Posterior vena cava (tissue), 2 donors: ENCODE measurements at regions of chr10 and their contacts with region 1.

Region 1: GRCh38 chr10:12902135-12902572 is 99.4 kb downstream of the CCDC3 start:
- DNase-seq: no peak

Region 2: DNA sequence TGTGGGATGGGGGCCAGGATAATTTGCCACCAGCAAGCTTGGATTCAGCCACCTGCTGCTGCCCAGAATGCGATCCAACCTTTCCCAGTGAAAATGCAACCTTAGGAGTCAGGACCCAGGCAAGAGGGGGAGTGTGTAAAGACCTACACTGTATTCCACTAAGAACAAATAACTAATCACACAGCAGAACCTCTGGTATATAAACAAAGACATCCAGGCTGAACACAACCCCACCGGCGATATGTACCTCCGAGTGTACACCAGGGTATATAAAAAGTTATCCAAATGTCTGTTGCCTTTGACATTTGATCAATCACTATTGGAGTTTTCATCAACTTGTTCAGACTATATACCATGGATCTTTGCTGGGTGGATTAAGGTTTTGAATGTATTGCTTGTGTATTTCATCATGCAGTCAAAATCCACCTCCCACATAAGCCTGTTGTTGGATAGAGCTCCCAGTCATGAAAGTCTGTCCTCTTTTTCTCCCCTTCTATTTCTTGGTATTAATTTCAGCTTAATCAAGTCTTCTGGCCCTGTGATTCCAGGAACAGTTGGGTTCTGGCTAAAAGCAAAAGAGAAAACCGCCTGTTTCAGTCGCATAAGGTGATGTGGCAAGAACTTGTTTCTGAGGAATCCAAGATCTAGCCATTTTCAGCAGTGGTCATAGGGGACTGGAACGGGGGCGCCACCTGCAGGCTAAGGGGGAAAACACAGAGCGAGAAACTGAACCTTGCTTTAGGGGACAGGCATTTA is 191.4 kb before region 1 on chr10:
- intact Hi-C with region 1: loop called in 1 of 2 experiments (anchors 10 kb)
- DNase-seq: peak; percentile 93

Region 3: DNA sequence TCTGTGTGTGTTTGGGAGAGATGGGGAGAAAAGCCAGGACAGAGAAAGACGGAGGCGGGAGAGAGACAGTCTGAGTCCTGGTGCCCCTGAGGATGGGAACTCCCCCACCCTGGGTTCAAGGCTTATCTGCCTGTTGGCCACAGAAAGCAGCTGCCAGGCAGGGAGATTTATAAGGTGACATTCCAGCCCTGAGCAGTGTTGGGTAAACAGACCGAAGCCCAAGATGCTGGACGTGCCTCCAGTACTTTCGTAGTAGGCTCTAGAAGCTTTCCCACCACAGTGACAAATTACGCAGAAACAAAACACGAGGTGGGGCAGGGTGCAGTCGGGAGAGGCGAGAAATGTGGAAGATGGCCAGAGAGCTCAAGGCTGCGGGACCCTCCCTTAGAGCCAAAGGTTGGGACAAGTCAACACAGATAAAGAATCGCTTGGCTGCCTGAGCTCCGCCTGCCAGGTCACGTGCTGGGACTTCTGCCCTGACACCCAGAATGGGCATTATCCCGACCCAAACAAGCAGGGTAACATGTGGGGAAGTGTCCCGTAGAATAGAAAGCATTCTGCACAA is 58.3 kb after region 1 on chr10:
- intact Hi-C with region 1: loop called in 1 of 2 experiments (anchors 10 kb)
- DNase-seq: no peak

Region 4: DNA sequence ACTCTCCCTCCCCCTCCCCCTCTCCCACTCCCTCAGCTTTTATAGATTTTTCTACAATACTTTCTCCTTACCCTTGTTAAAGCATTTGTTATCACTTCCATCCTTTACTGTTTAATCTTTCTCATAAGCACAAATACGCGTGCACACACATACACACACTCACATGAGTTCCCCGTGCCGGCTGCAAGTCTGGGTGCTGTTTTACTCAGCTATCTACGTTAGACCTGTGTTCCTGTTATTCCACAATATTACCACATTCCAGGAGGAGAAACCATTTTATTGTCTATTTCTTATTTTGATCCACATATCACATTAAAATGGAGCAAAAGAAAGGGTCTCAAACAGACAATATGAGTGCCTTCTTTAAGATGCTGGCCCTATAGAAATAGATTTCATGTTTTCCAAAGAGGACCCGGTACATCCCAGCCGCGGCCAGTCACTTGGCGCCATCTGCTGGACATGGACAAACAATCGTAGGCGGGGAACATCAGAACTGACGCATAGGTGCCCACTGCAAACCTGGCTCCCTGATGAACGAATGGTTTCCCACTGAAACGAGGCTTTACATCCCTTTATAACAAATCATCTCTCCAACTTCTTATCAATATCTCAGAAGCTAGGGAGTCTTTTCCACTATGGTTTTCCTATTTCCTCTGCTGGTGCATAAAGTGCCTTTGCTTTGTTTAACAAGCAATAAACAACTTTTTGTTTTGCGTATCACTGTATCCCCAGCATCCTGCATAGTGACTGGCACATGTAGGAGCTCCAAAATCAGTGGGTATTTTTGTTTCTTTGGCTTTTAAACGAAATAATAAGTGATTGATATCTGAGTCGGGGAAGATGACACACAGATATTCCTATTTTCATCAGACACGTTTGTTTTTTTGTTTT is 172.7 kb after region 1 on chr10:
- intact Hi-C with region 1: loop called in 1 of 2 experiments (anchors 10 kb)
- DNase-seq: peak; percentile 90